Ascending aorta (tissue), 2 donors: ENCODE measurements at regions of chr3 and their contacts with region 1.

Region 1: GRCh38 chr3:138594150-138594934 is at the start of gene CEP70:
- DNase-seq: peak; percentile 85 to 97
- H3K4me3 ChIP-seq: peak within 1 kb of the TSS; percentile 63 to 91
- H3K27ac ChIP-seq: peak within 1 kb of the TSS; percentile 88 to 94
- H3K4me1 ChIP-seq: peaks cover 0 to 5% of the 10 kb centered on the region in 2 donors
- H3K27me3 ChIP-seq: no peaks in the 10 kb centered on the region
- CTCF ChIP-seq: peak; percentile 87 to 93 (median 91)
- total RNA-seq, gene CEP70: 7.6 TPM

Region 2: DNA sequence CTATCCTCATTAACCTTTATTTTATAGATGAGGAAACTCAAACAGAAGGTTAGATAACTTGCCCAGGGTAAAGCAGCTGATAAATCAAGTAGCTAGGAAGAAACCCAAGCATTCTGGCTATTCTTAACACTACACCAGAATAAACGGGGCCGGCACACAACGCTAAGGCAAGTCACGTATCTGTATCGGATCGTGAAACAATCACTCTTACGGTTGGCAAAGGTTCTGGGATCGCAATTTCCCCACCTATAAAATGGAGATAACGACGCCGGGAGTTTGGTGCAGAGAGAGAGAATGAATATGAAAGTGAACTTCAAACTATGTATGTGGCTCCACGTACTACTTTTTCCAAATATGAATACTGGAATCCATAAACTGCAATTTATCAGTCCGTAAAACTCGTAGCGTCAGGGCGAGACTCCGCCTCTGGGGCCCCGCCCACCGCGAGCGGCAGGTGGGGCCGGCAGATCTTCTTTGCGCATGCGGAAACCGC is 407.5 kb before region 1 on chr3:
- intact Hi-C with region 1: loop called (anchors 5 kb)
- DNase-seq: peak; percentile 58 to 95
- H3K4me3 ChIP-seq: peak overlapping the region; percentile 95 to 100
- H3K27ac ChIP-seq: peak overlapping the region; percentile 97 to 100
- H3K4me1 ChIP-seq: peaks cover 2 to 24% of the 10 kb centered on the region in 2 donors
- H3K27me3 ChIP-seq: no peaks in the 10 kb centered on the region
- CTCF ChIP-seq: no peak

Region 3: DNA sequence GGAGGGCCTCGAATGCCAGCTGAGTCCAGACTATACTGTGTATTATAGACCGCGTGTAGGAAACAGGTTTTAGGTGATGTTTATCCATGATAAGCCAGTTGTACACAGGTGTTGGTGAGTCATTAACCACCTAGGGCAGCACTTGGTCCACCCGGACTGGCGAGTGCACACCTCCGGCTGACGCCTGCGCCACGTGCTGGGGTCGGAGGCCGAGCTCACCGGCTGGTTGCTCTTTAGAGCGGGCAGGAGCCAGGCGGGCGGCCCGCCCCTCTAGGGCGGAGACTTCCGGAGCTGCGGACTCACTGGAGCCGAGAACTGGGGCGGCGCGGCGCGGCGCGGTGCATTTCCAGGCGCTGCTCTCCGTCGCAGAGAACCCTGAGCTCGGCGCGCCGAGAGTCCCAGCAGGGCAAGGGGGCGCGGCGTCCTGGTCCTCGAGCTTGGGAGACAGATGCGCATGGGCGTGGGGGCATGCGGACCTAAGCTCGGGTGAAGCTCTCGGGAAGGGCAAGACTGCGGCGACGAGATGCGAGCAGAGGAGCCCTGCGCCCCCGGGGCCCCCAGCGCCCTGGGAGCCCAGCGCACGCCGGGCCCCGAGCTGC is 160.0 kb before region 1 on chr3 and contains the start of gene ESYT3:
- intact Hi-C with region 1: loop called (anchors 10 kb)
- DNase-seq: peak in 1 of 2 donors; percentile 80
- H3K4me3 ChIP-seq: peak within 1 kb of the TSS; percentile 65 to 72
- H3K27ac ChIP-seq: peak within 1 kb of the TSS in 1 of 2 donors; percentile 36
- H3K4me1 ChIP-seq: peaks cover 4 to 10% of the 10 kb centered on the region in 2 donors
- H3K27me3 ChIP-seq: no peaks in the 10 kb centered on the region
- CTCF ChIP-seq: no peak
- total RNA-seq, gene ESYT3: not detected

Region 4: DNA sequence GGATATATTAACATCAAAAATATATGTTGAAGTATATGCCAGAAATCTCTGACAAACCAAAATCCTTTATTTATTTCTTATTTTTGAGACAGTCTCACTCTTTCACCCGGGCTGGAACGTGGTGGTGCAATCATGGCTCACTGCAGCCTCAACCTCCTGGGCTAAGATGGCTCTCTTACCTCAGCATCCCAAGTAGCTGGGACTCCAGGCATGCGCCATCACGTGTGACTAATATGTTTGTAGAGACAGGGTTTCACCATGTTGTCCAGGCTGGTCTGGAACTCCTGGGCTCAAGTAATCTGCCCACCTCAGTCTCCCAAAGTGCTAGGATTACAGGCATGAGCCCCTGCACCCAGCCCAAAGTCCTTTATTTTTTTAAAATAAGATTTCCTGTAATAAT is 26.1 kb after region 1 on chr3:
- intact Hi-C with region 1: no loop called
- DNase-seq: no peak
- H3K4me3 ChIP-seq: no peak overlapping the region
- H3K27ac ChIP-seq: no peak overlapping the region
- H3K4me1 ChIP-seq: no peaks in the 10 kb centered on the region
- H3K27me3 ChIP-seq: no peaks in the 10 kb centered on the region
- CTCF ChIP-seq: no peak

Region 5: GRCh38 chr3:138694287-138695007 is 100.1 kb after region 1 on chr3:
- intact Hi-C with region 1: loop called (anchors 10 kb)
- DNase-seq: no peak
- H3K4me3 ChIP-seq: no peak overlapping the region
- H3K27ac ChIP-seq: peak overlapping the region in 1 of 2 donors; percentile 14
- H3K4me1 ChIP-seq: peaks cover 0 to 7% of the 10 kb centered on the region in 2 donors
- H3K27me3 ChIP-seq: no peaks in the 10 kb centered on the region
- CTCF ChIP-seq: no peak

Region 6: DNA sequence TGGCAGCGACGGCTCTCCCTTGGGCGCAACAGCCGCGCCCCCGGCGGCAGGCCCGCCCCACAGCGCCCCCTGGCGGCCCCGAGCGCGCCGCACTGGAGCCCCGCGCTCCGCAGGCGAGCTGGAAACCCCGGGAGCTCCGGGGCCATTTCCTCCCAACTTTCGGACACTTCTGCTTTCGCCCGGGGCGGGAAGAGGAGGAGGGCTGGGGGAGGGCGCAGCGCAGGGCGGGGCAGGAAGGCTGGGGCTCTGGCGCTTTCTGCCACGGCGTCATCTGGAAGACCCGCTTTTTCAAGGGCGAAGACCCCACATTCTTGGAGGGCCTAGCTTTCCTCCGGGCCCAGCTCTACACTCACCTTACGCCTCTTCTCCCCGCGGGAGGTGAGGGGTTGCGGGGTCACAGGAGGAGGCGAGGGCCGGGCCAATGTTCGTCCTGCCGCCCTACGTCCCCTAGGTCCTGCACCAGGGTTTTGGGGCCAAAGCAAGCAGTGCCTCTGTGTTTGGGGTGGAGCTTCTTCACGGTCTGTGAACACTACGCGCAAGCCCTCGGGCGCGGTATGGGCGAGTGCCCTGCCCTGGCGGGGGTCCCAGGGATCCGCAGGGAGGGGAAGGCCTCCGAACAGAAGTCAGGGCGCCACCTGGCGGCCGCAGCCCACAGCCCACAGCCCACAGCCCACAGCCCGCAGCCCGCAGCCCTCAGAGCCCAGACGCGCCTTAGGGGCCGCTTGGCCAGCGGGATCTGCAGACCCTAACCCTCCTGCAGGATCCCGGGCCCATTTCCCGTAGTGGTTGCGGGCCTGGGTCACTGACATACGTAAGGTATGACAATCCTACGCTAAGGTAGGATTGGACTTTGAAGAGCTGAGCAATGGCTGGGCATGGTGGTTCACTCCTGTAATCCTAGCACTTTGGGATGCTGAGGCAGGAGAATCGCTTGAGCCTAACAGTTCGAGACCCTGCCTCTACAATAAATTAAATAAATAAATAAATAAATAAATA is 321.5 kb after region 1 on chr3:
- intact Hi-C with region 1: loop called (anchors 1 kb)
- DNase-seq: peak; percentile 71 to 96
- H3K4me3 ChIP-seq: peak overlapping the region; percentile 74 to 84
- H3K27ac ChIP-seq: peak overlapping the region; percentile 92 to 94
- H3K4me1 ChIP-seq: no peaks in the 10 kb centered on the region
- H3K27me3 ChIP-seq: no peaks in the 10 kb centered on the region
- CTCF ChIP-seq: peak; percentile 84 to 92 (median 87)

Region 7: DNA sequence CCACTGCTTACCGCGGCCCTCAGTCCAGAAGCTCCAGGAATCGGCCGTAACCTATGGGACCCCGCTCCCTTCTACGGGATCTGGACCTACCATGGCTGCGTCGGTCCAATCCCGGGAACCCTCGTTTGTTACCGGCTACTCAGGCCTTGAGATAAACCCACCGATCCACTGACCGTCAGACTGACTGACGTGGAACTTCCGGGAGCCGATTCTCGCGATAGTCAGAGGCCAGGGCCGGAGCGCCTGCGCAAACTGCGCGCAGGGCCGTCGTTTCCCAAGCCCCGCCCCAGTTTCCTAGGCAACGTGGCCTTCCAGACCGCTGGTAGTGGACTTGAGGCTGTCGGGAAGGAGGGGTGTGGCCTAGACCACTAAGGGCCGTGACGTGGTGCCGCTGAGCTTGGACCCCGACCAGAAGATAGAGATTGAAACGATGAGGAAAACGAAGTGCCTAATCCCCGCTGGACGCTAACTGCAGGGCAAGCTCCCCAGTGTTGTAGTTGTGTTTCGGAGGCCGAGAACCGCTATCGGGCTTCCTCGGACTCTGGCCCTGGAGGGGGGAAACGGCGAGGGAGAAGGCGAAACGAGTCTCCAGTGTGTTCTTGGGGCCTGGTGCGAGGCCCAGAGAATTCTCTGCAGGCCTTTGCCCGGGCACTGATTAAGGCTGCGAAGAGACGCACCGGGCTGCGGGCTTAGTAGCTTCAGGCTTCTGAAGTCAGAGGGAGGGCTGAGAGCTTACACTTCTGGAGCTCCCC is 795.3 kb after region 1 on chr3 and contains the start of gene COPB2:
- intact Hi-C with region 1: loop called (anchors 1 kb)
- DNase-seq: peak; percentile 97 to 100
- H3K4me3 ChIP-seq: peak within 1 kb of the TSS; percentile 98 to 99
- H3K27ac ChIP-seq: peak within 1 kb of the TSS; percentile 96
- H3K4me1 ChIP-seq: peaks cover 3 to 25% of the 10 kb centered on the region in 2 donors
- H3K27me3 ChIP-seq: no peaks in the 10 kb centered on the region
- CTCF ChIP-seq: no peak
- total RNA-seq, gene COPB2: 26.6 TPM